ENCODE measurements at regions of chrX and their contacts with region 1.

Region 1: GRCh38 chrX:71365876-71366673 is at the start of gene TAF1:
- DNase-seq: peak; percentile 98
- H3K4me3 ChIP-seq: peak within 1 kb of the TSS; percentile 54 to 91 (median 68)
- H3K27ac ChIP-seq: peak within 1 kb of the TSS; percentile 99
- H3K4me1 ChIP-seq: peaks cover 15% of the 10 kb centered on the region
- H3K27me3 ChIP-seq: no peaks in the 10 kb centered on the region
- CTCF ChIP-seq: no peak
- POLR2A ChIP-seq: peak; percentile 70
- total RNA-seq, gene TAF1: 39.0 and 41.0 TPM in 2 replicates

Region 2: DNA sequence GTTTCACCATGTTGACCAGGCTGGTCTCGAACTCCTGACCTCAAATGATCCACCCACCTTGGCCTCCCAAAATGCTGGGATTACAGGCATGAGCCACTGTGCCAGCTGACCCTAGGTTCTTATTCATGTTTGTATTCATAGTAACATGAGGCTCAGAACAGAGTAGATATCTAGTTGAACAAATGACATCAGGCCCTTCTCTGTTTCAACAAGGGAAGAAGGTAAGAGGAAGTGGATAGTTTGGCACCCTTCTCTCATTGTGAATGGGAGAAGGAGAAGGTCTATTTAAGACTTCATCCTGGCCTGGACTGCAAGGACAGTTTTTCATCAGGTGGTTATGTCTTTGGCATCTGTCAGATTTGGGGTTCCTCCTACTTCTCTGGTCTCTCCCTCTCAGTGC is 129.2 kb before region 1 on chrX:
- CTCF ChIA-PET with region 1: no interaction called
- POLR2A ChIA-PET with region 1: no interaction called
- dilution Hi-C with region 1: no loop called
- intact Hi-C with region 1: no loop called
- DNase-seq: no peak
- H3K4me3 ChIP-seq: no peak overlapping the region
- H3K27ac ChIP-seq: no peak overlapping the region
- H3K4me1 ChIP-seq: no peaks in the 10 kb centered on the region
- H3K27me3 ChIP-seq: no peaks in the 10 kb centered on the region
- CTCF ChIP-seq: no peak
- POLR2A ChIP-seq: no peak

Region 3: GRCh38 chrX:71254092-71254941 is 111.8 kb before region 1 on chrX and contains the start of gene ZMYM3:
- CTCF ChIA-PET with region 1: no interaction called
- POLR2A ChIA-PET with region 1: no interaction called
- dilution Hi-C with region 1: no loop called
- intact Hi-C with region 1: loop called (anchors 1 kb)
- DNase-seq: peak; percentile 80
- H3K4me3 ChIP-seq: peak within 1 kb of the TSS; percentile 80 to 96 (median 94)
- H3K27ac ChIP-seq: peak within 1 kb of the TSS; percentile 51
- H3K4me1 ChIP-seq: peaks cover 8% of the 10 kb centered on the region
- H3K27me3 ChIP-seq: no peaks in the 10 kb centered on the region
- CTCF ChIP-seq: no peak
- POLR2A ChIP-seq: peak; percentile 24
- total RNA-seq, gene ZMYM3: 32.9 and 33.1 TPM in 2 replicates

Region 4: DNA sequence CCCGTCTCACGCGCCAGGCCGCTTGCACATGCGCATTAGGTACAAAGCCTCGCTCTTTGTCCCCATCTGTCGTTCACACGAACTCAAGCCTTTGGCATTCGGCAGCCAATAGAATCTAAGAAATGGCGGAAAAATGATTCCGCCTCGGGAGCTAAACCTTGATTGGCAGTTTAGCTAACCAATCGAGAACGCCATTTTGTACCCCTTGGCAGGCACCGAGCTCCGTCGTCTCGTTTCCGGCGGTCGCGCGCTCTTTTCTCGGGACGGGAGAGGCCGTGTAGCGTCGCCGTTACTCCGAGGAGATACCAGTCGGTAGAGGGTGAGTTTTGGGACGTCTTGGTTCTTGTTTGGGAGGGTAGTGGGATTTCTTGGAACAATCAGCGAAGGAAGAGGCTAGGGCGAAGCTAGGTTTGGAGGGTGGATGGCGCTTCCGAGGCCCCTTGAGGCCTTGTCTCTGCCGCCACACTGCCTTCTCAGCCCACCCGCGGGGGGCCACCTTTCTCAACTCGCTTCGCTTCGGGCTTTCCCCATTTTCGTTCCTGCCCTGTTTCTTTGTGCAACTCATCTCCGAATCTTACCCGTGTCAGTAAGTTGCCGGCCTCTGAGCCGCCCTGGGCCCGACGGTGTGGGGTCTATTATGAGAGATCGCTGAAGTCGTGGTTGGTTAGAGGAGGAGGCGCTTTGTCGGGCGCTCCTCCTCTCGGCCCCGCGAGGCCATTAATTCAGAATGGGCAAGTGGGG is 82.5 kb before region 1 on chrX and contains the start of gene NONO:
- CTCF ChIA-PET with region 1: no interaction called
- POLR2A ChIA-PET with region 1: interaction called, 5 read pairs
- dilution Hi-C with region 1: no loop called
- intact Hi-C with region 1: loop called (anchors 1 kb)
- DNase-seq: peak; percentile 96
- H3K4me3 ChIP-seq: peak within 1 kb of the TSS; percentile 62 to 96 (median 92)
- H3K27ac ChIP-seq: peak within 1 kb of the TSS; percentile 97
- H3K4me1 ChIP-seq: peaks cover 13% of the 10 kb centered on the region
- H3K27me3 ChIP-seq: no peaks in the 10 kb centered on the region
- CTCF ChIP-seq: peak; percentile 2 to 13
- POLR2A ChIP-seq: peak; percentile 71
- total RNA-seq, gene NONO: 465 and 466 TPM in 2 replicates

Region 5: DNA sequence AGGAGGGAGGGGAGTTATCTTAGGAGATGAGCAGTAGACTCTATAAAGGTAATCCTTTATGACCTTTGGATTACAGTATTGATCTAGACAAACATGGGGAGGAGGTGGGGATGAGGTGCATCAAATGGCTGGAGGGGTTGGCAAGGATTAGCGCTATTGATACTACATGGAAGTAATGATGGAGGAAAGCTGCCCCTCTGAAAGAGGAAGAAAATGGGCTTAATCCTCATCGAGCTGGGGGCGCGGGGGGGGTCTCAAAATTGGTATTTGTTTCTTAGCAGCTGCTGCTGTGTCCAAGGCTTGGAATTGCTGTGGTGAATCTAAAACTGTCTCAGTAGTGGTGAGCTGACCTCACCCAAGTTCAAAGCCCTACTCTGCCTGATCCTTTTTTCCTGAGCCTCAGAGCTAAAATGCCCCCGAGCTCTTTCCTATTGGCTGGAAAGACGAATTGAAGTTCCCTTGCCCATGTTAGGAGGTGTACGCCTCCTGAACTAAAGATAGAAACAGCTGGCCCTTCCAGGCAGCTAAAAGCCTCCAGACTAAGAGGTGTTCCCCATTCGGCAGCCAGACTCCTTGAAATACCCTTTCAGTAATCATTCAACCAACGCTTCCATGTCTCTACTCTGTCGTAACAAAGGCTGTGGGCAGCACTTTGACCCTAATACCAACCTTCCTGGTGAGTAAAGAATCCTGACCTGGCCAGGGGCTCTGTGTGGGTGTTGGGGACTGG is 64.7 kb before region 1 on chrX and contains the start of gene ITGB1BP2:
- CTCF ChIA-PET with region 1: no interaction called
- POLR2A ChIA-PET with region 1: no interaction called
- dilution Hi-C with region 1: no loop called
- intact Hi-C with region 1: loop called (anchors 5 kb)
- DNase-seq: peak; percentile 1
- H3K4me3 ChIP-seq: no peak within 1 kb of the TSS
- H3K27ac ChIP-seq: peak within 1 kb of the TSS; percentile 37
- H3K4me1 ChIP-seq: peaks cover 26% of the 10 kb centered on the region
- H3K27me3 ChIP-seq: no peaks in the 10 kb centered on the region
- CTCF ChIP-seq: no peak
- POLR2A ChIP-seq: no peak
- total RNA-seq, gene ITGB1BP2: 4.6 and 5.9 TPM in 2 replicates

Region 6: DNA sequence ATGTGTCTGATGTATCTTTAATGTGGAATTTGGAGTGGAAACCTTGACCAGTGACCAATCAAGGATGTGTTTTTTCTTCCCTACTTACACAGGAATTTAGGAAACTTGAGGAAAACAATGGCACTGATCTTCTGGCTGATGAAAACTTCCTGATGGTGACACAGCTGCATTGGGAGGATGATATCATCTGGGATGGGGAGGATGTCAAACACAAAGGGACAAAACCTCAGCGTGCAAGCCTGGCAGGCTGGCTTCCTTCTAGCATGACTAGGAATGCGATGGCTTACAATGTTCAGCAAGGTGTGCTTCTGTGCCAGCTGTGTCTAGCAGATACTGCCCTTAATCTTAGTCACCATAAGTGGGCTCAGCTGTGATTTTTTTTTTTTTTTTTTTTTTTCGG is 12.7 kb after region 1 on chrX:
- CTCF ChIA-PET with region 1: interaction called, 3 read pairs
- POLR2A ChIA-PET with region 1: interaction called, 8 read pairs
- dilution Hi-C with region 1: no loop called
- intact Hi-C with region 1: loop called (anchors 1 kb)
- DNase-seq: peak; percentile 68
- H3K4me3 ChIP-seq: no peak overlapping the region
- H3K27ac ChIP-seq: peak overlapping the region; percentile 95
- H3K4me1 ChIP-seq: peaks cover 10% of the 10 kb centered on the region
- H3K27me3 ChIP-seq: no peaks in the 10 kb centered on the region
- CTCF ChIP-seq: no peak
- POLR2A ChIP-seq: no peak

Measured in endothelial cell of umbilical vein (primary cell).